Naive thymus-derived CD4-positive, alpha-beta T cell (primary cell): ENCODE measurements at regions of chr18 and their contacts with region 1.

Region 1: GRCh38 chr18:62186774-62187542 is at the starts of genes PIGN and RELCH:
- DNase-seq: peak; percentile 73 to 98 (median 96)
- ATAC-seq: peak; percentile 97
- H3K4me3 ChIP-seq: peak within 1 kb of the TSS; percentile 97
- H3K4me3 Mint-ChIP-seq: peak within 1 kb of the TSS; percentile 96 to 100 (median 99)
- H3K27ac ChIP-seq: peak within 1 kb of the TSS; percentile 74
- H3K27ac Mint-ChIP-seq: peak within 1 kb of the TSS; percentile 91 to 98 (median 96)
- H3K4me1 ChIP-seq: peaks cover 18 to 21% of the 10 kb centered on the region in 2 donors
- H3K4me1 Mint-ChIP-seq: peaks cover 48 to 76% (median 69%) of the 10 kb centered on the region in 7 donors
- H3K27me3 ChIP-seq: no peaks in the 10 kb centered on the region
- H3K27me3 Mint-ChIP-seq: no peaks in the 10 kb centered on the region
- total RNA-seq, gene PIGN: 18.2 to 29.8 (median 28.2) TPM
- total RNA-seq, gene RELCH: 51.3 to 70.8 (median 62.1) TPM

Region 2: GRCh38 chr18:62198259-62198658 is 11.3 kb after region 1 on chr18:
- CTCF ChIA-PET with region 1: no interaction called
- POLR2A ChIA-PET with region 1: interaction called, 16 read pairs
- intact Hi-C with region 1: loop called in 1 of 2 experiments (anchors 1 kb)
- DNase-seq: no peak
- ATAC-seq: no peak
- H3K4me3 ChIP-seq: no peak overlapping the region
- H3K4me3 Mint-ChIP-seq: peak overlapping the region in 3 of 10 donors; percentile 17 to 45 (median 30)
- H3K27ac ChIP-seq: no peak overlapping the region
- H3K27ac Mint-ChIP-seq: peak overlapping the region in 2 of 9 donors; percentile 0
- H3K4me1 ChIP-seq: peaks cover 3 to 15% of the 10 kb centered on the region in 2 donors
- H3K4me1 Mint-ChIP-seq: peaks cover 38 to 81% (median 73%) of the 10 kb centered on the region in 7 donors
- H3K27me3 ChIP-seq: no peaks in the 10 kb centered on the region
- H3K27me3 Mint-ChIP-seq: no peaks in the 10 kb centered on the region

Region 3: GRCh38 chr18:62324917-62325805 is 138.2 kb after region 1 on chr18 and contains the start of gene TNFRSF11A:
- CTCF ChIA-PET with region 1: no interaction called
- POLR2A ChIA-PET with region 1: no interaction called
- intact Hi-C with region 1: loop called in 1 of 2 experiments (anchors 2 kb)
- DNase-seq: peak; percentile 19 to 83 (median 46)
- ATAC-seq: peak; percentile 91
- H3K4me3 ChIP-seq: peak within 1 kb of the TSS; percentile 50
- H3K4me3 Mint-ChIP-seq: peak within 1 kb of the TSS; percentile 80 to 93 (median 84)
- H3K27ac ChIP-seq: no peak within 1 kb of the TSS
- H3K27ac Mint-ChIP-seq: peak within 1 kb of the TSS in 5 of 9 donors; percentile 15 to 73 (median 65)
- H3K4me1 ChIP-seq: peaks cover 14 to 17% of the 10 kb centered on the region in 2 donors
- H3K4me1 Mint-ChIP-seq: peaks cover 18 to 53% (median 34%) of the 10 kb centered on the region in 7 donors
- H3K27me3 ChIP-seq: peaks cover 12 to 20% of the 10 kb centered on the region in 2 donors
- H3K27me3 Mint-ChIP-seq: peaks cover 46 to 78% (median 70%) of the 10 kb centered on the region in 5 donors
- total RNA-seq, gene TNFRSF11A: 0.16 to 22.2 (median 0.68) TPM

Region 4: DNA sequence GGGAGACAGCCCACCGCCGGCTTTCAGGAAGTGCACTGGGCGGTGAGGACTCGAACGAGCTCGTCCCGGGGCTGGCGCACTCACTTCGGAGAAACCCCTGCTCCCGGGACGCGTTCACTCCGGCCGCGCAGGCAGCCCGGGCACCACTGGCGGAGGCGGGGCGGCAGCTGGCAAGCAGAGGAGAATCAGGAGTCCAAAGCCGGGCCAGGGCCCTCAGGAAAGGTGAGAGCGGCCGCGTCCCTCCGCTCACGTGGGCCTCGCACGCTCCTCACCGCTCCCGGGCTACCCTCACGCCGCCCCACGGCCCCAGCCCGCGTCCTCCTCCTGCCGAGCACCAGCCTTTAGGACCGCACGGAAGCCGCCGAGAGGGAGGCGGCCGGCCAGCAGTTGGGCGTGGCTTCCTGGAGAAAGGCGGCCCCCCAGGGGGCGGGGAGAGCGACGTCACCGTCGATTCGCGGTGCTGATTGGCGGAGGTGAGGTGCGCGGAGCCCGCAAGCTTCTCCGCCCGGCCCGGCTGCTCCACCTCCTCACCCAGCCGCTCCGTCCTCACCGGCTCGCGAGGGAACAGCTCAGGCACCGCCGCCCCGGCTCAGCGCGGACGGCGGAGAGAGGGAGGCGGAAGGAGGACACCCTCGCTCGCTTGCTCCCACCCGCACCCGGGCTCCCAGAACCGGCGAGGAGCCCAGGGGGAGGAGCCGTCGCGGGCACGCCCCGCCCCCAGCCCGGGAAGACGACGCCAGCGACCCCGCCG is 335.7 kb after region 1 on chr18 and contains the start of gene ZCCHC2:
- CTCF ChIA-PET with region 1: no interaction called
- POLR2A ChIA-PET with region 1: interaction called, 5 read pairs
- intact Hi-C with region 1: loop called (anchors 1 kb)
- DNase-seq: peak; percentile 96 to 100 (median 99)
- ATAC-seq: peak; percentile 88
- H3K4me3 ChIP-seq: peak within 1 kb of the TSS; percentile 81
- H3K4me3 Mint-ChIP-seq: peak within 1 kb of the TSS; percentile 91 to 98 (median 96)
- H3K27ac ChIP-seq: peak within 1 kb of the TSS; percentile 88
- H3K27ac Mint-ChIP-seq: peak within 1 kb of the TSS; percentile 62 to 97 (median 93)
- H3K4me1 ChIP-seq: peaks cover 23 to 26% of the 10 kb centered on the region in 2 donors
- H3K4me1 Mint-ChIP-seq: peaks cover 21 to 44% (median 37%) of the 10 kb centered on the region in 7 donors
- H3K27me3 ChIP-seq: no peaks in the 10 kb centered on the region
- H3K27me3 Mint-ChIP-seq: no peaks in the 10 kb centered on the region
- total RNA-seq, gene ZCCHC2: 51.1 to 68.5 (median 63.1) TPM

Region 5: GRCh38 chr18:62576845-62577512 is 390.0 kb after region 1 on chr18:
- CTCF ChIA-PET with region 1: no interaction called
- POLR2A ChIA-PET with region 1: no interaction called
- intact Hi-C with region 1: no loop called
- DNase-seq: no peak
- ATAC-seq: no peak
- H3K4me3 ChIP-seq: no peak overlapping the region
- H3K4me3 Mint-ChIP-seq: no peak overlapping the region
- H3K27ac ChIP-seq: no peak overlapping the region
- H3K27ac Mint-ChIP-seq: peak overlapping the region in 3 of 9 donors; percentile 31 to 86 (median 64)
- H3K4me1 ChIP-seq: no peaks in the 10 kb centered on the region
- H3K4me1 Mint-ChIP-seq: peaks cover 0 to 30% (median 4%) of the 10 kb centered on the region in 7 donors
- H3K27me3 ChIP-seq: no peaks in the 10 kb centered on the region
- H3K27me3 Mint-ChIP-seq: no peaks in the 10 kb centered on the region

Region 6: DNA sequence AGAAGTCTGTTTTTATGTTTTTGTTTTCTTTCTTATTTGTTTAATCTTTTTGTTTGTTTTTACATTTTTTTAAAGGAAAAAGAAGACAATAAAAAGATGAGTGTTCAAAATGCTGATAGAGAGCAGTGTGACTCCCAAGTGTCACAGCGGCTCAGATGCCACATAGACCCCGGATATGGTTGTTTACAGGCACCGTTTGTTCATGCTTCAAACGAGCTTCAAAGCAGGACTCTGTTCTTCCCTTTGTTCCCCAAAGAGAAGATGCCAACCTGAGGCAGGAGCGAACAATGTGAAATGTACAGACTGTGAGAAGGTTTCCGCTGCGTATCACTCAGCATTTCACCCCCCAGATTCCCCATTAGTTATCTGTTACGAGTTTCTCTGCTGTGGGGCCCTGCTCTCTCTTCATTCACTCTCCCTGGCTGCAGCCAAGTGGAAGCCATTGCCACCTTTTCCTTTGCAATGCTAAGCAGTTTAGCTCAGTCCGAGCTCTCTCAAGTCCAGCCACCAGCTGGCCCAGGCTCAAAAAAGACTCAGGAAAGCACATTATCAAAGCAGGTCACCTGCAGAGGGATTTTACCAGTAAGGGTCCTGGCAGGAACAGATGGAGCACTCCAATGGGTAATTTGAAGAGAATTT is 492.0 kb after region 1 on chr18:
- CTCF ChIA-PET with region 1: no interaction called
- POLR2A ChIA-PET with region 1: no interaction called
- intact Hi-C with region 1: no loop called
- DNase-seq: no peak
- ATAC-seq: no peak
- H3K4me3 ChIP-seq: no peak overlapping the region
- H3K4me3 Mint-ChIP-seq: peak overlapping the region in 1 of 10 donors; percentile 25
- H3K27ac ChIP-seq: no peak overlapping the region
- H3K27ac Mint-ChIP-seq: no peak overlapping the region
- H3K4me1 ChIP-seq: no peaks in the 10 kb centered on the region
- H3K4me1 Mint-ChIP-seq: no peaks in the 10 kb centered on the region
- H3K27me3 ChIP-seq: no peaks in the 10 kb centered on the region
- H3K27me3 Mint-ChIP-seq: peaks cover 0 to 12% (median 9%) of the 10 kb centered on the region in 5 donors

Region 7: GRCh38 chr18:62867534-62867933 is 680.6 kb after region 1 on chr18:
- CTCF ChIA-PET with region 1: no interaction called
- POLR2A ChIA-PET with region 1: no interaction called
- intact Hi-C with region 1: loop called in 1 of 2 experiments (anchors 5 kb)
- DNase-seq: no peak
- ATAC-seq: no peak
- H3K4me3 ChIP-seq: no peak overlapping the region
- H3K4me3 Mint-ChIP-seq: peak overlapping the region in 1 of 10 donors; percentile 5
- H3K27ac ChIP-seq: no peak overlapping the region
- H3K27ac Mint-ChIP-seq: peak overlapping the region in 1 of 9 donors; percentile 14
- H3K4me1 ChIP-seq: peaks cover 3 to 9% of the 10 kb centered on the region in 2 donors
- H3K4me1 Mint-ChIP-seq: peaks cover 12 to 33% (median 21%) of the 10 kb centered on the region in 7 donors
- H3K27me3 ChIP-seq: no peaks in the 10 kb centered on the region
- H3K27me3 Mint-ChIP-seq: no peaks in the 10 kb centered on the region

Region 8: GRCh38 chr18:63378919-63379638 is 1192.1 kb after region 1 on chr18:
- CTCF ChIA-PET with region 1: no interaction called
- POLR2A ChIA-PET with region 1: no interaction called
- intact Hi-C with region 1: loop called in 1 of 2 experiments (anchors 10 kb)
- DNase-seq: no peak
- ATAC-seq: no peak
- H3K4me3 ChIP-seq: no peak overlapping the region
- H3K4me3 Mint-ChIP-seq: peak overlapping the region in 9 of 10 donors; percentile 2 to 65 (median 19)
- H3K27ac ChIP-seq: no peak overlapping the region
- H3K27ac Mint-ChIP-seq: peak overlapping the region; percentile 5 to 85 (median 61)
- H3K4me1 ChIP-seq: peaks cover 0 to 7% of the 10 kb centered on the region in 2 donors
- H3K4me1 Mint-ChIP-seq: peaks cover 14 to 29% (median 19%) of the 10 kb centered on the region in 7 donors
- H3K27me3 ChIP-seq: no peaks in the 10 kb centered on the region
- H3K27me3 Mint-ChIP-seq: no peaks in the 10 kb centered on the region